ENCODE measurements at regions of chr1 and their contacts with region 1.

Region 1: GRCh38 chr1:182595641-182596240 is 6.7 kb upstream of the RNASEL start:
- DNase-seq: peak; percentile 51
- H3K27ac ChIP-seq: no peak overlapping the region
- CTCF ChIP-seq: peak; percentile 61

Region 2: GRCh38 chr1:182549346-182549745 is 46.4 kb before region 1 on chr1:
- CTCF ChIA-PET with region 1: no interaction called
- POLR2A ChIA-PET with region 1: no interaction called
- DNase-seq: no peak
- H3K27ac ChIP-seq: no peak overlapping the region
- CTCF ChIP-seq: no peak

Region 3: GRCh38 chr1:182643706-182644105 is 48.0 kb after region 1 on chr1:
- CTCF ChIA-PET with region 1: no interaction called
- POLR2A ChIA-PET with region 1: no interaction called
- DNase-seq: peak; percentile 69
- H3K27ac ChIP-seq: peak overlapping the region; percentile 35; the same call in 1 of the 2 replicates
- CTCF ChIP-seq: no peak

Region 4: DNA sequence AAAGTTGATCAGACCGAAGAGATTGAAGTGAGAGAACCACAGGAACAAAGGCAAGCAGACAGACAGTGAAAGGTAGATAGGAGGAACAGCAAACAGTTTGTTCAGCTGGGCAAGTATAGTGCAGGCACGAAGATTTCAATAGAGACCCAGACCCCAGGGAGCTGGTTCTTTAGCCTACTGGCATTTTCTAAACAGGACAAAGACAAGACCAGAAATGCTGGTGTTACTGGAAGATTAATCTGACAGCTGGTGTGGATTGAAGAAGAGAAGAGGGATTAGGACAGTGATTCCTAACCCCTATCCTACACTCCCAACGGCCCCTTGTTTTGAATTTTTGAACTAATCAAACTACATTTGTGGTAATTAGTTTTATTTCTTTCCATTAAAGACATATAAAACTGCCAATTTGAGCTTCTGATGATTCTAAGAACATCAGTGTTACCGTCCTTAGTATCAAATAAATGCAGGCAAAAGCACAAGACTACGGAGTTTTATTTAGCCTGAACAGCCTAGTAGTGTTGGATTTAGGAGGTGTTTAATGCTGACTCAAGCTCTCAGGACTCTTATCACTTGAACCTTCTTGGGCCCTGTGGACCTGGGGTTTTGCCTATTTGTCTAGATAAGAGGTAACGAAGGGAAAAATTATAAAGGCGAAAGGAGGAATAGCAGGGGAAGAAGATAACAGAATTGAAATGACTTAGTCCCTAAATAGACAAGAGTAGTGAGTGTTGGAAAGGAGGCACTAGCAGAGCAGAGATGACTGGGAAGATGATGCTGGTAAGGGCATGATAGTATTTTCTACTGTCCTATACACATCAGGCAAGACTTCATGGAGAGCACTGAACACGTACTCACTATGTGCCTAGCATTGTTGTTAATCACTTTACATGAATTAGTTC is 195.8 kb after region 1 on chr1:
- CTCF ChIA-PET with region 1: interaction called, 106 read pairs
- POLR2A ChIA-PET with region 1: no interaction called
- DNase-seq: no peak
- H3K27ac ChIP-seq: no peak overlapping the region
- CTCF ChIP-seq: no peak

Measured in RWPE1 (cell line).